ENCODE measurements at regions of chr1 and their contacts with region 1.

Region 1: DNA sequence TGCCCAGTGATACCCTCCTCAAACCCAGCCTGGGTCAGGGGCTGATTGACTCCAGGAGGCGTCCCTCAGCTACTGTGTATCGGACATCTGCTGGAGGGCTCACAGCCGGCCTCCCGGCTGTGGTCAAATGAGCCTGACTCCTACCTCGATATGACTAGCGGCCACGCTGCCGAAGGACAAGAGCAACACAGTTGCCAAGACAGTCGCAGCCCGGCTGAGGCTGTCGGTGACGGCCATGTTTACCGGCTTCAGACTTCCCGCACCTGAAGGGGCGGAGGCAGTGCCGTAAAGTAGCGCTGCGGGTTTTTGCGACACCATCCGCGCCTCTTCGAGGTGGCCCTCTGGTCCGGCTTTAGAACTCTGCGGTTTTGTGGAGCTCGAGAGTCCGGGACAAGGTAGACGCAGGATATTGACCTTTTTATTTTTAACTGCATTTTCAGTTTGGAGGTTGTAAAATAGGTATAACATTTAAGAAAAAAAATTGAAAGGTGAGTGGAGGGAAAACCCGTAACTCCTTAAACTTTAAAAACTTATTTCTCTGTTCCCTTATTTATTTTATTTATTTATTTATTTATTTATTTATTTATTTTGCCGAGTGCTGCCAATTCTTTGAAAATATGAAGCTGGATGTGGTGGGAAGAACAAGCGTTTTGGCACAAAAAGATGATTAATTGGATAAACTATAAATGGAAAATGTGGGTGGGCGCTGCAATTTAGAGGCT is at the start of gene PIGK:
- DNase-seq: peak; percentile 76 to 93 (median 82)
- ATAC-seq: peak; percentile 96
- H3K4me3 ChIP-seq: peak within 1 kb of the TSS; percentile 99
- H3K4me3 Mint-ChIP-seq: peak within 1 kb of the TSS; percentile 98
- H3K27ac ChIP-seq: peak within 1 kb of the TSS; percentile 86 to 88
- H3K27ac Mint-ChIP-seq: peak within 1 kb of the TSS; percentile 98
- H3K4me1 ChIP-seq: peaks cover 10% of the 10 kb centered on the region
- H3K4me1 Mint-ChIP-seq: peaks cover 60% of the 10 kb centered on the region
- H3K27me3 ChIP-seq: no peaks in the 10 kb centered on the region
- H3K27me3 Mint-ChIP-seq: no peaks in the 10 kb centered on the region
- CTCF ChIP-seq: no peak
- total RNA-seq, gene PIGK: 10.1 to 10.3 TPM

Region 2: GRCh38 chr1:75341537-75341936 is 1877.8 kb before region 1 on chr1:
- CTCF ChIA-PET with region 1: no interaction called
- POLR2A ChIA-PET with region 1: no interaction called
- intact Hi-C with region 1: no loop called
- DNase-seq: no peak
- ATAC-seq: no peak
- H3K4me3 ChIP-seq: no peak overlapping the region
- H3K4me3 Mint-ChIP-seq: no peak overlapping the region
- H3K27ac ChIP-seq: no peak overlapping the region
- H3K27ac Mint-ChIP-seq: no peak overlapping the region
- H3K4me1 ChIP-seq: no peaks in the 10 kb centered on the region
- H3K4me1 Mint-ChIP-seq: no peaks in the 10 kb centered on the region
- H3K27me3 ChIP-seq: no peaks in the 10 kb centered on the region
- H3K27me3 Mint-ChIP-seq: no peaks in the 10 kb centered on the region
- CTCF ChIP-seq: no peak

Region 3: GRCh38 chr1:77156214-77156613 is 63.1 kb before region 1 on chr1:
- CTCF ChIA-PET with region 1: no interaction called
- POLR2A ChIA-PET with region 1: no interaction called
- intact Hi-C with region 1: loop called in 1 of 2 experiments (anchors 5 kb)
- DNase-seq: no peak
- ATAC-seq: no peak
- H3K4me3 ChIP-seq: no peak overlapping the region
- H3K4me3 Mint-ChIP-seq: no peak overlapping the region
- H3K27ac ChIP-seq: no peak overlapping the region
- H3K27ac Mint-ChIP-seq: no peak overlapping the region
- H3K4me1 ChIP-seq: no peaks in the 10 kb centered on the region
- H3K4me1 Mint-ChIP-seq: peaks cover 10% of the 10 kb centered on the region
- H3K27me3 ChIP-seq: no peaks in the 10 kb centered on the region
- H3K27me3 Mint-ChIP-seq: no peaks in the 10 kb centered on the region
- CTCF ChIP-seq: no peak

Region 4: GRCh38 chr1:77281491-77282186 is 62.3 kb after region 1 on chr1 and contains the start of gene AK5:
- CTCF ChIA-PET with region 1: no interaction called
- POLR2A ChIA-PET with region 1: interaction called, 21 read pairs
- intact Hi-C with region 1: loop called (anchors 2 to 5 kb)
- DNase-seq: peak; percentile 13 to 71 (median 45)
- ATAC-seq: peak; percentile 73
- H3K4me3 ChIP-seq: peak within 1 kb of the TSS; percentile 69
- H3K4me3 Mint-ChIP-seq: peak within 1 kb of the TSS; percentile 88
- H3K27ac ChIP-seq: peak within 1 kb of the TSS in 1 of 2 donors; percentile 51
- H3K27ac Mint-ChIP-seq: peak within 1 kb of the TSS; percentile 62
- H3K4me1 ChIP-seq: peaks cover 33% of the 10 kb centered on the region
- H3K4me1 Mint-ChIP-seq: peaks cover 55% of the 10 kb centered on the region
- H3K27me3 ChIP-seq: peaks cover 0 to 11% of the 10 kb centered on the region in 2 experiments
- H3K27me3 Mint-ChIP-seq: no peaks in the 10 kb centered on the region
- CTCF ChIP-seq: no peak
- total RNA-seq, gene AK5: 32.0 TPM

Region 5: DNA sequence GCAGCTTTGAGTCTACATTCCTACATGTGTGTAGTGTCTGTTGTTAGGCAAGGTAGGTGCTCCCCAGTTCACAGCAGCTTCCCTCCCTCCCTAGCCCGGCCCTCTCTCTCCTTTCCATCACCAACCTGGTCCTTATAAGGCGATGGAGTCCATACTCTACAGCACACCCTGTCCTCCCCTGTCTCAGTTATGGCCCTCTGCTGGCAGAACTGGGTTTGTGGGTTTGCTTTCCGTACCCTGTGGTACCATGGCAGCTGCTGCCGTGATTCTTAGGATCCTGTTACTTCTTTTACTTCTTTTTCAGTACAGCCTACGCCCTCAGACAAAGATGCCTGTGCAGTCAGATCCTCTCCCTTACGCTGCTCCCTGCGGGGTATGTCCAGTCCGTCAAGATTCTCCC is 94.2 kb after region 1 on chr1:
- CTCF ChIA-PET with region 1: no interaction called
- POLR2A ChIA-PET with region 1: interaction called, 11 read pairs
- intact Hi-C with region 1: no loop called
- DNase-seq: peak in 9 of 14 experiments; percentile 10 to 51 (median 25)
- ATAC-seq: peak; percentile 30
- H3K4me3 ChIP-seq: no peak overlapping the region
- H3K4me3 Mint-ChIP-seq: no peak overlapping the region
- H3K27ac ChIP-seq: no peak overlapping the region
- H3K27ac Mint-ChIP-seq: peak overlapping the region; percentile 21
- H3K4me1 ChIP-seq: peaks cover 10% of the 10 kb centered on the region
- H3K4me1 Mint-ChIP-seq: peaks cover 53% of the 10 kb centered on the region
- H3K27me3 ChIP-seq: no peaks in the 10 kb centered on the region
- H3K27me3 Mint-ChIP-seq: no peaks in the 10 kb centered on the region
- CTCF ChIP-seq: no peak

Region 6: DNA sequence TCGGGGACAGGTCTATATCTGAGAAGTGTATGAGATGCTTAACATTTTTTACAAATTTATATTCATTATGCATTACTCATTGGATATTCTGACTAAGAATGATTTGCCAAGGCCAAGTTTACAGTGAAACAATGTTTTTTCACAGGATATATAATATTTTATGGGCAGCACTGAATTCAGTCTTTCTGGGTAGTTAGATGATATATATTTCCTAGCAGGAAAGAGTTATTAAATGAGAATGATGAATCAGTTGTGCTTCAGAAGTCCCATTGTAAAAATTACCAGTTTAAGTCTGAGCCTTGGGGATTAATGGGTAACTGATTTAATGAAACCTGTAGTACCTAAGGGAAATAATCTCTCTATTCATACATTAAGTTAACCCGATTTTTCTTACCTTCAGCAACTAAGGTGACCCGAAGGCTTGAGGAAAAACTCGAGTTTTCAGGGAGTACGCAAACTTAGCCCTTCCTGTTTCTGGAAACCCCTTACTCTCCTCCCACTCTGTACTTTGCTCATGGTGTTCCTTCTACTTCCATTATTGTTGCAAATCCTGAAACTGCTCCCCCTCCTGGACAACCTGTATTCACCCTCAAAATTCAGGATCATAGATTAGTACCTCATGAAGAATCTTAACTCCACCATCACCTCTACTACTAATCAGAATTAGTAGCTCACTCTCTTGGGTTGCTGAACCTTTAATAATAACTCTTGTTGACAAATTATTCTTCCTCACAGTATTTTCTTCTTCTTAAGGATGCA is 197.5 kb after region 1 on chr1:
- CTCF ChIA-PET with region 1: no interaction called
- POLR2A ChIA-PET with region 1: interaction called, 3 read pairs
- intact Hi-C with region 1: loop called in 1 of 2 experiments (anchors 5 kb)
- DNase-seq: no peak
- ATAC-seq: no peak
- H3K4me3 ChIP-seq: no peak overlapping the region
- H3K4me3 Mint-ChIP-seq: no peak overlapping the region
- H3K27ac ChIP-seq: no peak overlapping the region
- H3K27ac Mint-ChIP-seq: no peak overlapping the region
- H3K4me1 ChIP-seq: peaks cover 29% of the 10 kb centered on the region
- H3K4me1 Mint-ChIP-seq: peaks cover 53% of the 10 kb centered on the region
- H3K27me3 ChIP-seq: no peaks in the 10 kb centered on the region
- H3K27me3 Mint-ChIP-seq: no peaks in the 10 kb centered on the region
- CTCF ChIP-seq: no peak

Region 7: GRCh38 chr1:77533660-77534305 is 314.5 kb after region 1 on chr1:
- CTCF ChIA-PET with region 1: no interaction called
- POLR2A ChIA-PET with region 1: interaction called, 3 read pairs
- intact Hi-C with region 1: loop called (anchors 5 kb)
- DNase-seq: peak; percentile 37 to 80 (median 55)
- ATAC-seq: peak; percentile 66
- H3K4me3 ChIP-seq: no peak overlapping the region
- H3K4me3 Mint-ChIP-seq: peak overlapping the region; percentile 17
- H3K27ac ChIP-seq: no peak overlapping the region
- H3K27ac Mint-ChIP-seq: peak overlapping the region; percentile 13
- H3K4me1 ChIP-seq: peaks cover 13% of the 10 kb centered on the region
- H3K4me1 Mint-ChIP-seq: peaks cover 7% of the 10 kb centered on the region
- H3K27me3 ChIP-seq: no peaks in the 10 kb centered on the region
- H3K27me3 Mint-ChIP-seq: no peaks in the 10 kb centered on the region
- CTCF ChIP-seq: peak; percentile 91

Region 8: DNA sequence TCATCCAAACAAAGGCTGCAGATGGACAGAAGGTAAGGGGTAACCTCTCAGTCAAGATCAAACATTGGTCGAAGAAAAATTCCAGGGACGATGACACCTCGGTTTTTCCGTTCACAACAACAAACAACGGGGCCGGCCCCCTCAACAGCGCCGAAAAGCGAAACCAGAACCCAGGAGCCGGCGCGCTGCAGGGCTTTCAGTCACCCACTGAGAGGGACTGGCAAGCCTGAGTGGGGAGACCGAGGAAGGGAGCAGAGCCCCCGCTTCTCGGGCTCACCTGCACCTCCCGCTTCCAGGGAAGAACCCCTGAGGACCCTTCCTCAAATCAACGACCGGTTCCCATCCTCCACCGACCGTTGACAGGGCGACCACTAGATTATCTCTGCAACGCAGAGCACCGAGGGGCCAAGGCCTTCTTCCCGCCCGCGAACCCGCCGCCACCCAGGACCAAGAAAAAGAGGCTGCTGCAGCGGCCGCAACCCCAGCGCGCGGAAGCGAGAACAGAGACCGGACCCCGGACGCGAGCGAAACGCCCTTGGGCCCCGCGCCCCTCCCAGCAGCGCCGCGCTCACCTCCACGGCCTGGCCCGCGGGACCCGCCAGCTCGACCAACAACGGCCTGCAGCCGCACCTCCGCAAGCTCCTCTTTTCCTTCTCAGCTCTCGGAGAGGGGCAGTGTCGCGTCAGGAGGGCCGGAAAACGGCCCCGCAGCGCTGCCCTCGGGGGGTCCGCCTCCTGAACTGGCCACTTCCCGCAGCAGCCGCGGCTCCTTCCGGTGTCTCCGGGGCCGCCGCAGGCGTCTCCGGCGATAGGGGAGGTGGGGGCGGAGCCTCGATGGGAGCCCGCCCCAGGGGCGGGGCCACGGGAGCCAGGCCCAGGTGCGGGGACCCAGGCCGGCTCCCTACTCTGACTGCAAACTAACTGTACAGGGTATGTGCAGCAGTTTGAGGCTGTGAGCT is 540.0 kb after region 1 on chr1 and contains the start of gene USP33:
- CTCF ChIA-PET with region 1: no interaction called
- POLR2A ChIA-PET with region 1: no interaction called
- intact Hi-C with region 1: loop called in 1 of 2 experiments (anchors 10 kb)
- DNase-seq: peak; percentile 86 to 97 (median 92)
- ATAC-seq: peak; percentile 95
- H3K4me3 ChIP-seq: peak within 1 kb of the TSS; percentile 80
- H3K4me3 Mint-ChIP-seq: peak within 1 kb of the TSS; percentile 90
- H3K27ac ChIP-seq: peak within 1 kb of the TSS; percentile 29 to 88
- H3K27ac Mint-ChIP-seq: peak within 1 kb of the TSS; percentile 87
- H3K4me1 ChIP-seq: peaks cover 23% of the 10 kb centered on the region
- H3K4me1 Mint-ChIP-seq: peaks cover 57% of the 10 kb centered on the region
- H3K27me3 ChIP-seq: no peaks in the 10 kb centered on the region
- H3K27me3 Mint-ChIP-seq: no peaks in the 10 kb centered on the region
- CTCF ChIP-seq: no peak
- total RNA-seq, gene USP33: 69.7 to 71.6 TPM

Measured in CD4-positive, alpha-beta T cell (primary cell).